Cardiac septum (tissue), 1 donor: ENCODE measurements at regions of chr6 and their contacts with region 1.

Region 1: GRCh38 chr6:43013843-43014433 is at the starts of genes KLHDC3 and MEA1:
- DNase-seq: peak; percentile 99
- total RNA-seq, gene KLHDC3: 74.9 TPM
- total RNA-seq, gene MEA1: 33.8 TPM

Region 2: DNA sequence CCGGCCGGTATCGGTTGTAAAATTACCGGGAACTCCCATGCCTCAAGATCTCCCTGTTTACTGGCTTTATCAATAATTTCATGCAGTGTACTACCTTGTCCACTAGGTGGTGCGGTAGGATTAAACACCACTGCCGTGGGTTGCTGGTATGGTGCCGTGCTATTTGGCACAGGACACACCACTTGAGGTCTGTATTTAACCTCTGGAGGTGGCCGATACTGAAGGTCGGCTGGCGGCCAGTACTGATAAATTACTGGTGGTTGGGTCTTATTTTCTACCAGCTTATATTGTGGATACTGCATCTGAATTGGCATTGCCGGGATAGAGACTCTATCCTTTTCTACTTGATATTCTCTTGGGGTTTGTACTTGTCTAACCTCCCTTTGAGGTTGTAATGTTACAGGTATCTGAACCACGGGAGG is 112.4 kb before region 1 on chr6:
- intact Hi-C with region 1: loop called (anchors 5 kb)
- DNase-seq: peak; percentile 88

Region 3: DNA sequence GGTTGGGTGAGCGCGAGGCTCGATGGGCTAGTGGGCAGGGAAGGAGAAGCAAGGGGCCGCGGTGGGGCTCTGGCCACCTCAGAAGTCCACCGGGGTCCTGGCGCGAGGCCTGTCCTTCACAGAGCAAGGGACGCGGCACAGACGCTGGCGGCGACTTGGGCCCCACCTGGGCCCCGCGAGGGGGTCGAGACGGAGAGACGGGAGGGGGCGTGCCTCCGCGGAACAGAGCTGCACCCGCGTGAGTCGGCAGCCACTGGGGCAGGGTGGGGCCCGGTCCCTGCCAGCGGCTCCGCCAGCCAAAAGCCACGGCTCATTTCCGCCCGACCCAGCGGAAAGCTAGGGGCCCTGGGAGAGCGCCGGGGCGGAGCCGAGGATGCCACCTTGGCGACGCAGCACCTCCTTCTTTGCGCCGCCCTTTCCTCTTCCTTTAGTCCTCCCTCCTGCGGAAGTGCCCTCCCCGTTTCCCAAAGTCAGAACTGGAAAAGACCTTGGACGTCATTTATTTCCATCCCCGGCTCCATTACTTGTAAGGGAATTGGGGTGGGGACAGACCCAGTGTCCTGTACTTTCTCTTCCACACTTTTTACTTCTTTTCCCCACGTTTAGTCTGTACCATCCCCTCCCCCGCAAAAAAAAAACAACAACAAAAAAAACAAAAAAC is 39.7 kb after region 1 on chr6 and contains the start of gene CUL7:
- intact Hi-C with region 1: loop called (anchors 2 kb)
- DNase-seq: peak; percentile 96
- total RNA-seq, gene CUL7: 11.0 TPM

Region 4: GRCh38 chr6:43059168-43060033 is 45.5 kb after region 1 on chr6 and contains the starts of genes KLC4 and MRPL2:
- intact Hi-C with region 1: loop called (anchors 1 kb)
- DNase-seq: peak; percentile 100
- total RNA-seq, gene KLC4: 31.1 TPM
- total RNA-seq, gene MRPL2: 76.4 TPM